Right lobe of liver (tissue), 6 donors: ENCODE measurements at regions of chr7 and their contacts with region 1.

Region 1: GRCh38 chr7:112192236-112193154 is 13.7 kb downstream of the DOCK4 start:
- DNase-seq: no peak
- ATAC-seq: peak; percentile 15 to 74 (median 49)
- H3K4me3 ChIP-seq: no peak overlapping the region
- H3K27ac ChIP-seq: no peak overlapping the region
- H3K4me1 ChIP-seq: peaks cover 0 to 17% (median 8%) of the 10 kb centered on the region in 4 donors
- H3K27me3 ChIP-seq: no peaks in the 10 kb centered on the region
- CTCF ChIP-seq: no peak
- POLR2A ChIP-seq: no peak

Region 2: GRCh38 chr7:111855161-111855856 is 337.2 kb before region 1 on chr7:
- intact Hi-C with region 1: no loop called
- DNase-seq: no peak
- ATAC-seq: peak; percentile 63 to 85 (median 72)
- H3K4me3 ChIP-seq: no peak overlapping the region
- H3K27ac ChIP-seq: no peak overlapping the region
- H3K4me1 ChIP-seq: no peaks in the 10 kb centered on the region
- H3K27me3 ChIP-seq: no peaks in the 10 kb centered on the region
- CTCF ChIP-seq: peak; percentile 19 to 54 (median 40)
- POLR2A ChIP-seq: no peak

Region 3: DNA sequence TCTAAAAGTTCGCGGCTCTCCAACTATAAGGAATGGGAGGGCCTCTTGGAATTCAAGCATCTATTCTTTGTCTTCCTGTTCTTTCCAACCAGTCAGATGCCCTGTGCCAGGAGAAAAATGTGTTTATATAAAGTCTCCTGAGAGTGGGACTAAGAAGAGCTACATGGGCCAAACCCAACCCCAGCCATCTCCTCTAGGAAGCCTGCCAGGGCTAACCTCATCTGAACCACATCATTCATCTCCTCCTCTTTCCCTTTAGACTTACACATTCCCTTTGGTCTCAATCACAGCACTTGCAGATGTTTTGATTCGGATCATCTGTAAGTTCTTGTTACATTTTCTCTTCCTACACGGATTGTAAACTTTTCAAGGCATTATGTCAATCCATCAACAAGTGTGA is 48.9 kb before region 1 on chr7:
- intact Hi-C with region 1: loop called in 1 of 2 experiments (anchors 10 kb)
- DNase-seq: no peak
- ATAC-seq: no peak
- H3K4me3 ChIP-seq: no peak overlapping the region
- H3K27ac ChIP-seq: peak overlapping the region in 1 of 3 donors; percentile 36
- H3K4me1 ChIP-seq: peaks cover 0 to 21% (median 5%) of the 10 kb centered on the region in 4 donors
- H3K27me3 ChIP-seq: no peaks in the 10 kb centered on the region
- CTCF ChIP-seq: no peak
- POLR2A ChIP-seq: no peak

Region 4: DNA sequence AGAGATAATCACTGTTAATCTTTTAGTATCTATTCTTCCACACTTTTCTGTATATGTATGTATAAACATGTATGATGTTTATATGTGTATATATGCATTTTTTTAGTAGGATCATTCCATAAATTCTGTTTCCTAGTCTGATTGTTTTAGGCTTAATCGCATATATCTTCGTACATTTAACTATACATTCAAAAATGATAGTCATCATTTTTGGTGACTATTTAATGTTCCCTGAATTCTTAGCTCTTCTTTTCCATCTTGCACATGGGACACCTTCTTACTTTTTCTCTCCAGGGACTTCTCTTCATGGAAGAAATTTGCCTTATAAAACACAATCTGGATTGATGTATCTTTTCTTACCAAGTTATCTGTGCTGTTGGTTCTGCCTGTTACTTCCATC is 56.1 kb after region 1 on chr7:
- intact Hi-C with region 1: no loop called
- DNase-seq: no peak
- ATAC-seq: no peak
- H3K4me3 ChIP-seq: no peak overlapping the region
- H3K27ac ChIP-seq: no peak overlapping the region
- H3K4me1 ChIP-seq: no peaks in the 10 kb centered on the region
- H3K27me3 ChIP-seq: no peaks in the 10 kb centered on the region
- CTCF ChIP-seq: no peak
- POLR2A ChIP-seq: no peak